ENCODE measurements at regions of chr1 and their contacts with region 1.

Region 1: DNA sequence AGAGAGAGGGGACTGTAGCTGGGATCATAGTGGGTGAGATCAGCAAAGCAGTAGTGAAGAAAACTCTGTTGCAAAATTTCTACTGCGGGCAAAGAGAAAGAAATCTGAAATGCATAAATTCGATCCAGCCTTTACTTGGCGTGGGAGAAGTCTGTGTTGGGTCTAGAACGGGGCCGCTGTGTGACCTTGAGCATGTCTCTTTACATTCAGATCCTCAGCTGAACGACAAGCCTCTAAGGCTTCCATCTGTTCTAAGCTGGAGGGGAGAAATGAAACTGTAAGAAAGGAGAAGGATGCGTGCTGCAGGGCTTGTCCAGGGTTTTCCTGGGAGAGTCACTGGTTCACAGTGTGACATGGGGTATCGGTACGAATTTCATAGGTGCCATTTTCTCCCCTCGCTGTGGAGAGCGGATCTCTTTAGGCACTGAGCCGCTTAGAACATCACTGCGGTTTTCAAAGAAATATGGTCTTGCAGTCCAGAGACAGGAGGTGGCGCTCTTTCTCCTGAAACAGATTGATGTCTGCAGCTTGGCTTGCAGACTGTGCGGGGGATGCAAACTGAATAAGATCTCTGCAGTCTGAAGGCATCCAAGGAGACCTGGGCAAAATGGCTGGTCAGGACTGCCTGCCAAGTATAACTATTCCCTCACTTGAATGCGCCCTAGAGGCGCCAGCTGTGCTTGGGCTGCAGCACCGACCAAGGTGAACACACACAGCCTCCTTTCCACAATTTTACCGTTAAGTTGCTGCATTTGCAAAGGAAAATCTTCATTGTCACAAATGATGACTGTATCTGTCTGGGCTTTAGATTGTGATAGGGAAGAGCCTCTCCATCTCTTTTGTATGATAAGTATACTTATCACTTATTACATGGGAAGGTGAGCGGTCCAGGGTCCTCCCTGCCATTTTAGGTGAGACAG is 104.1 kb downstream of the XCL2 start:
- DNase-seq: peak; percentile 94
- H3K4me3 ChIP-seq: peak overlapping the region in 1 of 2 donors; percentile 34
- H3K27ac ChIP-seq: peak overlapping the region in 1 of 2 donors; percentile 21
- H3K4me1 ChIP-seq: peaks cover 5% of the 10 kb centered on the region
- H3K27me3 ChIP-seq: no peaks in the 10 kb centered on the region
- CTCF ChIP-seq: peak; percentile 75 to 89 (median 78)
- POLR2A ChIP-seq: no peak

Region 2: DNA sequence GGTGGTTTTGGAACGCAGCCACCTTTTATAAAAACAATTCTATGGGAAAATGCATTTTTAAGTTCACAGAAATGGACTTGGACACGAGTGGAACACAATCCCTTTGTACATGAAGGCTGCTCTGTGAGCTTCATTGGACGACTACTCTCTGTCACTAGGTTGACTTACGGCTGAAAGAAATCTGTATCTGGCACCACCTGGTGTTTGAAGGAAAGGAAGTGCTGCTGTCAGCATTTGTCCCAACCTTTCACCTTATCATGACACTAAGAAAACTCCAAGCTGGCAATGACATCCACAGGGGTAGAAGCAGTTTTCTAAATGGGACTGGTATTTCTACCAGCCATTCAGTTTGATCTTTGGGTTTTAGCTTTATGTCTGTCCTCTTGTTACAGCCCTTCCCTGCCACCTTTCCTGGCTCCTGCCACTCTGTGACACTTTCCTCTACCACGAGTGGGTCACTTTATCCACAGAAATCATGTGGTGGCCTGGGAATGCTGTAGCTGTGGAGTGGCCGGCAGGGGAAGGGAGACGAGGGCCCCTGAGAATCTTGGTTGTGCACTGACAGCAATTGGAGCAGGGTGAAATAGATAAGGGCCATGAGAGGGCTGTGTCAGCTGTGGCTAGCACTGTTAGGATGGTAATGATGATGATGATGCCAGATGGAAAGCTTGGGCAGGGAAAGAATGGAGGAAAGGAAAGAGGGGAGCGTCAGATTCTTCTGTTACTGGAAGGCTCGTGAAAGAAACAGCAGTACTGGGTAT is 73.8 kb before region 1 on chr1:
- intact Hi-C with region 1: no loop called
- DNase-seq: no peak
- H3K4me3 ChIP-seq: no peak overlapping the region
- H3K27ac ChIP-seq: no peak overlapping the region
- H3K4me1 ChIP-seq: peaks cover 8% of the 10 kb centered on the region
- H3K27me3 ChIP-seq: no peaks in the 10 kb centered on the region
- CTCF ChIP-seq: no peak
- POLR2A ChIP-seq: no peak

Region 3: DNA sequence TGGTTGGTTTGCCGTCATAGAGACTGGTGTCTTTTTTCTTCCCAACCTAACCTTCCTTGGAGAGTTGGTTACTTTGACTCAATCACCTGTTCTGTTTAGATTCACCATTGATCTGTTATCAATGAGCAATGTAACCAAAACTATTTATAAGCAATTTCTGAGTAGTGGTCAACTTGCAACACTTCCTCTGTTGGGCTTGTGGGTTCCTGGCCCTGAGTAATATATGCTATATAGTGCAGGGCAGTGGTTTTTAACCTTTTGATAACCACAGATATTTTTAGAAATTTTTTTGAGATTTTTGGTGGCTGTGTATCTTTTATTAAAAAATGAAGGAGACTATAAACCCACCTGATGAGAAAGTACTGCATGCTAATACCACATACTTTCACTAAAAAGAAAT is 127.3 kb after region 1 on chr1:
- intact Hi-C with region 1: loop called (anchors 10 kb)
- DNase-seq: no peak
- H3K4me3 ChIP-seq: no peak overlapping the region
- H3K27ac ChIP-seq: no peak overlapping the region
- H3K4me1 ChIP-seq: no peaks in the 10 kb centered on the region
- H3K27me3 ChIP-seq: no peaks in the 10 kb centered on the region
- CTCF ChIP-seq: no peak
- POLR2A ChIP-seq: no peak

Measured in testis (tissue), 5 donors.